WTC11 (cell line): ENCODE measurements at regions of chr11 and their contacts with region 1.

Region 1: GRCh38 chr11:68950268-68950667 is 30.5 kb downstream of the MRGPRD start:
- DNase-seq: peak; percentile 43
- ATAC-seq: peak; percentile 93
- H3K4me3 Mint-ChIP-seq: no peak overlapping the region
- H3K27ac Mint-ChIP-seq: peak overlapping the region; percentile 76; the same call in 1 of the 2 replicates
- H3K4me1 Mint-ChIP-seq: peaks cover 23% of the 10 kb centered on the region
- H3K27me3 Mint-ChIP-seq: no peaks in the 10 kb centered on the region
- CTCF ChIP-seq: no peak

Region 2: GRCh38 chr11:69010964-69011623 is 60.8 kb after region 1 on chr11:
- CTCF ChIA-PET with region 1: interaction called, 31 read pairs
- POLR2A ChIA-PET with region 1: interaction called, 3 read pairs
- DNase-seq: peak; percentile 85
- ATAC-seq: peak; percentile 82
- H3K4me3 Mint-ChIP-seq: peak overlapping the region; percentile 39
- H3K27ac Mint-ChIP-seq: no peak overlapping the region
- H3K4me1 Mint-ChIP-seq: peaks cover 41% of the 10 kb centered on the region
- H3K27me3 Mint-ChIP-seq: peaks cover 5% of the 10 kb centered on the region
- CTCF ChIP-seq: no peak

Region 3: GRCh38 chr11:69088676-69089146 is 138.4 kb after region 1 on chr11:
- CTCF ChIA-PET with region 1: interaction called, 14 read pairs
- POLR2A ChIA-PET with region 1: no interaction called
- DNase-seq: peak; percentile 88
- ATAC-seq: peak; percentile 93
- H3K4me3 Mint-ChIP-seq: no peak overlapping the region
- H3K27ac Mint-ChIP-seq: peak overlapping the region; percentile 28; the same call in 1 of the 2 replicates
- H3K4me1 Mint-ChIP-seq: peaks cover 5% of the 10 kb centered on the region; the same call in 1 of the 2 replicates
- H3K27me3 Mint-ChIP-seq: no peaks in the 10 kb centered on the region
- CTCF ChIP-seq: peak; percentile 63